GM23248 (cell line): ENCODE measurements at regions of chr5 and their contacts with region 1.

Region 1: GRCh38 chr5:144203750-144204596 is 33.3 kb downstream of the KCTD16 start:
- DNase-seq: peak; percentile 75
- H3K4me3 ChIP-seq: no peak overlapping the region
- H3K27ac ChIP-seq: no peak overlapping the region
- H3K4me1 ChIP-seq: peaks cover 15% of the 10 kb centered on the region
- H3K27me3 ChIP-seq: peaks cover 16% of the 10 kb centered on the region; the same call in 1 of the 2 replicates

Region 2: DNA sequence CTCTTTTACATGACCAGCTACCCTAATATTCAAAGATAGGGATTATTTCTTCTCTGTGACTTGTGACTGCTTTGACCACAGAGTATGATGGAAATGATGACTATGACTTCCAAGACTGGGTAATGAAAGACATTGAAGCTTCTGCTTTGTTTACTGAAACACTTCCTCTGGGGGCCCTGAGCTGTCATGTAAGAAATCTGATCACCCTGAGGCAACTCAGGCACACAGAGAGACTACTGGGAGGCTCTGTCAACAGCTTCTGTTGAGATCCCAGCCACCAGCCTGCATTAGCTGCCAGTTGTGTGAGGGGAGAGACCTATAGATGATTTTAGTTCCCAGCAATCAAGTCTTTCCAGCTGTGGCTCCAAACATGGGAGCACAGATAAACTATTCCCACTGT is 43.2 kb after region 1 on chr5:
- in situ Hi-C with region 1: no loop called
- DNase-seq: no peak
- H3K4me3 ChIP-seq: no peak overlapping the region
- H3K27ac ChIP-seq: no peak overlapping the region
- H3K4me1 ChIP-seq: no peaks in the 10 kb centered on the region
- H3K27me3 ChIP-seq: no peaks in the 10 kb centered on the region

Region 3: GRCh38 chr5:145347026-145347616 is 1143.1 kb after region 1 on chr5:
- in situ Hi-C with region 1: loop called (anchors 10 kb)
- DNase-seq: peak; percentile 75
- H3K4me3 ChIP-seq: no peak overlapping the region
- H3K27ac ChIP-seq: no peak overlapping the region
- H3K4me1 ChIP-seq: peaks cover 27% of the 10 kb centered on the region
- H3K27me3 ChIP-seq: no peaks in the 10 kb centered on the region

Region 4: DNA sequence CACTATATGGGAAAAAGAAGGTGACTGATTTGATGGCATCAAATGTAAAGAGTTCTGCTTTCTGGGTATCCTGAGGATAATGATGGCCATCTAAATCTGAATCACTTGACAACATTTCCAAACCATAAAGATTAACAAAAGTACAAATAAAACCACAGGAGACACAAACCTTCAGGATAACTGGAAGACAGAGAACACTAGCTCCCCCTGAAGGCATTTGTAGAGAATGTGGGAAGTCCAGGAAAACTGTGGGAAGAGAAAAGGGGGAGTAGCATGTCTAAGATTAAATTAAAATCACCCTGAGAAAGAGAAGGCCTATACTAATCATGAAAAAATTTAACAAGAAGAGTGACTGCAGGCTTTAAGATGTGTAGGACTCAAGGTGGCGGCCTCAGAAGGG is 1515.0 kb after region 1 on chr5:
- in situ Hi-C with region 1: loop called (anchors 25 kb)
- DNase-seq: peak; percentile 57
- H3K4me3 ChIP-seq: no peak overlapping the region
- H3K27ac ChIP-seq: no peak overlapping the region
- H3K4me1 ChIP-seq: no peaks in the 10 kb centered on the region
- H3K27me3 ChIP-seq: no peaks in the 10 kb centered on the region

Region 5: GRCh38 chr5:145811834-145812625 is 1608.1 kb after region 1 on chr5:
- in situ Hi-C with region 1: loop called (anchors 25 kb)
- DNase-seq: peak; percentile 50
- H3K4me3 ChIP-seq: no peak overlapping the region
- H3K27ac ChIP-seq: no peak overlapping the region
- H3K4me1 ChIP-seq: no peaks in the 10 kb centered on the region
- H3K27me3 ChIP-seq: no peaks in the 10 kb centered on the region

Region 6: GRCh38 chr5:146052780-146053179 is 1848.8 kb after region 1 on chr5:
- in situ Hi-C with region 1: loop called (anchors 25 kb)
- DNase-seq: no peak
- H3K4me3 ChIP-seq: no peak overlapping the region
- H3K27ac ChIP-seq: no peak overlapping the region
- H3K4me1 ChIP-seq: no peaks in the 10 kb centered on the region; the same call in 1 of the 2 replicates
- H3K27me3 ChIP-seq: peaks cover 18% of the 10 kb centered on the region